Cardiac septum (tissue), 1 donor: ENCODE measurements at regions of chr17 and their contacts with region 1.

Region 1: GRCh38 chr17:39270923-39271322 is 45.2 kb upstream of the STAC2 start:
- DNase-seq: no peak

Region 2: GRCh38 chr17:39186481-39187002 is 84.4 kb before region 1 on chr17:
- intact Hi-C with region 1: no loop called
- DNase-seq: no peak

Region 3: GRCh38 chr17:39401412-39402243 is 130.7 kb after region 1 on chr17 and contains the start of gene FBXL20:
- intact Hi-C with region 1: loop called (anchors 10 kb)
- DNase-seq: peak; percentile 97
- total RNA-seq, gene FBXL20: 11.0 TPM